Ascending aorta (tissue), 2 donors: ENCODE measurements at regions of chr18 and their contacts with region 1.

Region 1: GRCh38 chr18:74147779-74148542 is at the starts of genes FBXO15 and TIMM21:
- DNase-seq: peak; percentile 82 to 97
- H3K4me3 ChIP-seq: peak within 1 kb of the TSS; percentile 78 to 90
- H3K27ac ChIP-seq: peak within 1 kb of the TSS; percentile 84 to 95
- H3K4me1 ChIP-seq: peaks cover 4 to 12% of the 10 kb centered on the region in 2 donors
- H3K27me3 ChIP-seq: no peaks in the 10 kb centered on the region
- CTCF ChIP-seq: no peak
- total RNA-seq, gene FBXO15: not detected
- total RNA-seq, gene TIMM21: 27.2 TPM

Region 2: GRCh38 chr18:73164430-73164829 is 983.5 kb before region 1 on chr18:
- intact Hi-C with region 1: no loop called
- DNase-seq: no peak
- H3K4me3 ChIP-seq: no peak overlapping the region
- H3K27ac ChIP-seq: no peak overlapping the region
- H3K4me1 ChIP-seq: no peaks in the 10 kb centered on the region
- H3K27me3 ChIP-seq: no peaks in the 10 kb centered on the region
- CTCF ChIP-seq: no peak

Region 3: GRCh38 chr18:74597662-74598349 is 449.8 kb after region 1 on chr18 and contains the start of gene ZNF407:
- intact Hi-C with region 1: loop called (anchors 2 kb)
- DNase-seq: peak; percentile 34 to 89
- H3K4me3 ChIP-seq: peak within 1 kb of the TSS; percentile 84 to 89
- H3K27ac ChIP-seq: peak within 1 kb of the TSS; percentile 99
- H3K4me1 ChIP-seq: peaks cover 0 to 17% of the 10 kb centered on the region in 2 donors
- H3K27me3 ChIP-seq: no peaks in the 10 kb centered on the region
- CTCF ChIP-seq: peak in 1 of 3 experiments; percentile 16
- total RNA-seq, gene ZNF407: 8.7 TPM